ENCODE measurements at regions of chr19 and their contacts with region 1.

Region 1: DNA sequence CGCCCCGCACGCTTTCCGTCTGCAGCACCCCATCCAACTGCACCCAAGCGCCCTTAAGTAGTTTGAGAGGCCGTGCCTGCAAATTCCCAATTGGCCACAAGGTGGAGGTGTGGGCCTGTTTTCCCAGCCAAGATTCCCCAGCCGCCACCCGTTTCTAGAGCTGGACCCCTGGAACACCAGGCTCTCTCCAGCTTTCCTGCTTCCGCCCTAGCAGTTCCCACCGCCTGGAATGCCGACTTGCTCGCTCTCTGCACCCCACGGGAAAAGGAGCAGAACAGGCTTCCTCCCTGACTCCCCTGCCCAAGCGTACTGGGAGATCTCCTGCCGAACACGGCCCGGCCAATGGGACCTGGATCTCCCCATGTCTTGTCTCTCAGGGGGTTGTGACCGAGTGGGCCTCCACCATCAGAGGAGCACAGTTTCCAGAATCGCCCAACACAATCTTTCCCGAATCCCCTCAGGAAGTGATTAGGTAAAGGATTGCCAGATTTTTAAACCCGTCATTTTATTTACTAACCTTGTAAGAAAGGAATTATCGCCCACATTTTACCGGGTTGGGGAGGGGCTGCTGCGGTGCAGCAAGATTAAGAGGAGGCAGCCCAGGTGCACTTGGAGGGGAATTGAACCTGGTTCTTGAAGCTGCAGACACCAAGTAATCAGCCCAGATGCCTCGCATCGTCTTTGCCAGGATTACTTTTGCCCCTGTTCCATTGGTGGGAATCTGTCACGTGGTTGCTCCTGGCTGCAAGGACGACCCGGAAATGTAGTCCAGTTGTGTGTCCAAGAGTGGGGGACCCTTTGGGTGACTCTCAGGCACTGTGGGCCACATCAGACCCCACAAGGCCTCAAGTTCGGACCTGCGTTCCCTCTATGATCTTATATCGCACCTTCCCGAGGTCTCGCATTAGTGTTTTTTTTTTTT is 3.5 kb upstream of the NAPSA start:
- DNase-seq: peak; percentile 75
- H3K4me3 Mint-ChIP-seq: peak overlapping the region; percentile 88
- H3K27ac Mint-ChIP-seq: peak overlapping the region; percentile 83
- H3K4me1 Mint-ChIP-seq: peaks cover 27% of the 10 kb centered on the region
- H3K27me3 Mint-ChIP-seq: no peaks in the 10 kb centered on the region

Region 2: DNA sequence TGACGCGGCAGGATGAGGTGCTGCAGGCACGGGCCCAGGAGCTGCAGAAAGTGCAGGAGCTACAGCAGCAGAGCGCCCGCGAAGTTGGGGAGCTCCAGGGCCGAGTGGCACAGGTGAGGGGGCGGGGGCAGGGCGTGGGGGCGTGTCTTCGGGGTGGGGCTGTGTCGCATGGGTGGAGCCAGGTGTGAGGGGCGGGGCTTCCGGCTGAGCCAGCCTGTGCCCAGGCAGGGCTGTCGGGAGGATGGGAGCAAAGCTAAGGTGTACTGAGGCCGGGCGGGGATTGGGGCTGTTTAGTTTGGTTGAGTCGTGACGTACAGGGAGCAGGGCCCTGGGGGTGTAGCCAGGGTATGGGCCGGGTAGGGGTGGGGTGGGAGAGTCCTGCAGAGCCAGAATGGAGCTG is 102.0 kb before region 1 on chr19:
- intact Hi-C with region 1: no loop called
- DNase-seq: no peak
- H3K4me3 Mint-ChIP-seq: no peak overlapping the region
- H3K27ac Mint-ChIP-seq: no peak overlapping the region
- H3K4me1 Mint-ChIP-seq: no peaks in the 10 kb centered on the region
- H3K27me3 Mint-ChIP-seq: no peaks in the 10 kb centered on the region

Region 3: DNA sequence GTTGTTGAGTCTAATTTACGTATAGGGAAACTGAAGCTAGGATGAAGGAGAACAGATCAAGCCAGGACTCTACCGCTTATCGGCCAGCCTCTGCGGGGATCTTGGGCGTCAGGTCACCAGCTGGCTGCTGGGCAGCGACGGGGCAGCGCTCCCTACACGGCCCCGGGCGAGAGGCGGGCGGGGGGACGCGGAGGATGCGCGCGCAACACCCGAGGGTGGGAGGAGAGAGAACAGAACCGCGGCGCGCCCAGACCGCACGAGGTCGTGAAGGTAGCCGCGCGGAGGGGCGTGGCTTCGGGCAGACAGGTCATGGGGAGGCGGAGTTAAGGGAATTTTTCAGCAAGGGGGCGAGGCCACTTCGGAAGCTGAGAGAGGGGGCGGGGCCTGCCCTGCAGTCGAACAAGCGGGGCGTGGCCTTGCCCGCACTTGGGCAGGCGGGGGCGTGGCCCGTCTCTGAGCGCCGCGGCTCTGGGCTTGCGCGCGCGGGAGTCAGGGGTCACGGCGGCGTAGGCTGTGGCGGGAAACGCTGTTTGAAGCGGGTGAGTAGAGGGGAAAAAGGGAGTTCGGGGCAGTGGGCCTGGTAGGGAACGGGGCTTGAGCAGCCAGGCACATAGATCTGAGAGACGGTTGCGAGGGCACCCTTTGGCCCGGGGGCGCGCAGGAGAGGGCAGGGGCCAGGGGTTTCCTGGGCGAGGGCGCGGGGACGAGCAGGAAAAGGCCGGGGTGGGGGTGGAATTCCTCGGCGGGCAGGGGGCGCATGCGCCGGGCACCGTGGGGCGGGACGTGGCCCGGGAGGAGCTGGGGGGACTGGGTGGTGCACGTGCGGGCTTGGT is 15.2 kb after region 1 on chr19 and contains the start of gene POLD1:
- intact Hi-C with region 1: loop called (anchors 1 kb)
- DNase-seq: peak; percentile 99
- H3K4me3 Mint-ChIP-seq: peak within 1 kb of the TSS; percentile 99
- H3K27ac Mint-ChIP-seq: peak within 1 kb of the TSS; percentile 96
- H3K4me1 Mint-ChIP-seq: peaks cover 28% of the 10 kb centered on the region
- H3K27me3 Mint-ChIP-seq: no peaks in the 10 kb centered on the region
- total RNA-seq, gene POLD1: 153 and 162 TPM in 2 replicates